ENCODE measurements at regions of chr11 and their contacts with region 1.

Region 1: GRCh38 chr11:96242971-96243647 is 99.9 kb downstream of the MAML2 start:
- DNase-seq: peak; percentile 100
- H3K4me3 ChIP-seq: peak overlapping the region; percentile 37
- H3K27ac ChIP-seq: peak overlapping the region; percentile 90
- H3K4me1 ChIP-seq: peaks cover 61% of the 10 kb centered on the region
- H3K27me3 ChIP-seq: no peaks in the 10 kb centered on the region
- CTCF ChIP-seq: no peak

Region 2: GRCh38 chr11:95835768-95836488 is 407.2 kb before region 1 on chr11:
- CTCF ChIA-PET with region 1: interaction called, 6 read pairs
- POLR2A ChIA-PET with region 1: no interaction called
- intact Hi-C with region 1: loop called (anchors 5 kb)
- DNase-seq: peak; percentile 93
- H3K4me3 ChIP-seq: no peak overlapping the region
- H3K27ac ChIP-seq: peak overlapping the region; percentile 39
- H3K4me1 ChIP-seq: peaks cover 16% of the 10 kb centered on the region
- H3K27me3 ChIP-seq: no peaks in the 10 kb centered on the region
- CTCF ChIP-seq: peak; percentile 99

Region 3: GRCh38 chr11:96012086-96012824 is 230.9 kb before region 1 on chr11:
- CTCF ChIA-PET with region 1: no interaction called
- POLR2A ChIA-PET with region 1: no interaction called
- intact Hi-C with region 1: loop called (anchors 5 kb)
- DNase-seq: peak; percentile 86
- H3K4me3 ChIP-seq: no peak overlapping the region
- H3K27ac ChIP-seq: no peak overlapping the region
- H3K4me1 ChIP-seq: peaks cover 14% of the 10 kb centered on the region
- H3K27me3 ChIP-seq: no peaks in the 10 kb centered on the region
- CTCF ChIP-seq: peak; percentile 84

Region 4: DNA sequence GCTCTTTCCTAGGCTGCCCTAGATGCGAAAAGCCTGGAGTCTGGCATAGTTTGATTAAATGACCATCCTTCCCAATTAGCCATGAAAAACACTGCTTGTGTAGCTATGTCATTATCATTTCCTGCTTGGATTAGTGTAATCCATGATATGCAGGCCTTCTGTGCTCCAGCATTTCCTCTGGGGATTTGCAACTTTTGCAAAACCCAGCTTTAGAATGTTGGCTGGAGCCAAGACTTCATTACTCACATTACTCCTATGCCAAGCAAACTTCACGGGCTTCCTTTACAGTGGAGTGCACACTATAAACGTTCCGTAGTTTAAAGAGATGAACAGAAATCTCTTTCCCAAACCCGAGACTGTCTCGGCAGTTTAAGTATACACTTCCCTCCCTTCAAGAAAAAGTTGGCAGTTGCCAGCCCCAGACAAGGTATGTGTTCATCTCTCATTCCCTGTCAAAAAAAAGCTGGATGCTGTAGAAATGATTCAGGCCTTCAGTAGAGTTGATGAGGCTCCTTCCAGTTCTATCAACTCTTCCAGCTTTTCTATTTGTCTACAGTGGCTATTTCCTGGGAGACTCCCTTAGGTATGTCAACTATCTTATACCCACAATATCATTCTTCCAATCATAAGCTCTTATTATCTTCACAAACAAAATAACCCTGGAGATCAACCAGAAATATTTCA is 80.2 kb before region 1 on chr11:
- CTCF ChIA-PET with region 1: no interaction called
- POLR2A ChIA-PET with region 1: interaction called, 10 read pairs
- intact Hi-C with region 1: loop called (anchors 5 kb)
- DNase-seq: peak; percentile 100
- H3K4me3 ChIP-seq: no peak overlapping the region
- H3K27ac ChIP-seq: peak overlapping the region; percentile 66
- H3K4me1 ChIP-seq: peaks cover 91% of the 10 kb centered on the region
- H3K27me3 ChIP-seq: no peaks in the 10 kb centered on the region
- CTCF ChIP-seq: no peak

Region 5: GRCh38 chr11:96342961-96343711 is 100.0 kb after region 1 on chr11 and contains the start of gene MAML2:
- CTCF ChIA-PET with region 1: interaction called, 14 read pairs
- POLR2A ChIA-PET with region 1: interaction called, 3 read pairs
- intact Hi-C with region 1: loop called (anchors 1 kb)
- DNase-seq: peak; percentile 99
- H3K4me3 ChIP-seq: peak within 1 kb of the TSS; percentile 61
- H3K27ac ChIP-seq: peak within 1 kb of the TSS; percentile 66
- H3K4me1 ChIP-seq: peaks cover 36% of the 10 kb centered on the region
- H3K27me3 ChIP-seq: no peaks in the 10 kb centered on the region
- CTCF ChIP-seq: peak; percentile 90
- total RNA-seq, gene MAML2: 6.4 and 7.9 TPM in 2 replicates

Measured in A673 (cell line).